Gastrocnemius medialis (tissue), 4 donors: ENCODE measurements at regions of chr15 and their contacts with region 1.

Region 1: DNA sequence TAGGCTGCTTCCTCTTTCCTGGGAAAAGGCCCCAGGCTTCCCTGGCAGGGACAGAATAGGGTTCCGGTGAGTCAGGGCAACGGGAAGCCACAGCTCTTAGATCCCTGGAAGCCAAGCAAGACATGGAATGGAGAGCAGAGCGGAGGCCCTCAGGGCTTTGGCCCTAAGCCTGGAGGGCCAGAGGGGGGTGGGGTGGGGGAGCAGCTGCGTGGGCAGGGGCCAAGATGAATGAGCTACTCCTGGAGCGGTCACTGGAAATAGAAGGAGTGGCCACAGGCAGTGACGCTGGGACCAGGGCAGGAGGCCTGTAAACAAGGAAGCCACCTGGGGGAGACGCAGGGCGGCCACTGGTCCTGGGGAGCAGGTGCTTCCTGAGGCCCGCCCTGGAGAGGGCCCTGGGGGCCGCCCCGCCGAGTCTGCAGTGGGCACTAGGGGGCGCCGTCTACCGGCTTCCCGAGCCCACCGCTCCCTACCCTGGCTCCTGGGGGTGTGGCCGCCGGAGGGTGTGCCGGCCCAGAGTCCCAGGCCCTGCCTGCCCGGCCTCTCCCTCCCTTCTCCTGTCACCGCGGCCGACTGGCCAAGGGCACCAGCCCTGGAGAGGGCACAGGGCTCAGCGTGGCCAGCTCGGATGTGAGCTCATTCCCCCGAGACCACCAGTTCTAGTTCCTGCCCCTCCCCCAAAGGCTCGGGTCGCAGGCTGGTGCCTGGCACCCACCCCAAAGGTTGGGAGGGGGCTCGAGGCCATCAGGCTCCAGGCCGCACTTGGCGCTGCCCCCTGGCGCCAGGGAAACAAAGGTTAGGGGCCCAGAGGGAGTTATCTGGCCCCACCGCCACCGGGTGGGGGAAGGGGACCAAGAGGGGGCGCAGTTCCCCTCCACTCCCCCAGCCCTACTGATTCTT is 12.1 kb downstream of the VPS18 start:
- DNase-seq: peak; percentile 88 to 94
- ATAC-seq: peak; percentile 69 to 77
- H3K4me3 ChIP-seq: peak overlapping the region; percentile 56 to 62 (median 60)
- H3K27ac ChIP-seq: peak overlapping the region; percentile 91 to 94 (median 93)
- H3K4me1 ChIP-seq: peaks cover 34 to 42% of the 10 kb centered on the region in 2 donors
- H3K27me3 ChIP-seq: no peaks in the 10 kb centered on the region
- CTCF ChIP-seq: peak; percentile 91 to 97 (median 94)
- POLR2A ChIP-seq: peak; percentile 54 to 58

Region 2: DNA sequence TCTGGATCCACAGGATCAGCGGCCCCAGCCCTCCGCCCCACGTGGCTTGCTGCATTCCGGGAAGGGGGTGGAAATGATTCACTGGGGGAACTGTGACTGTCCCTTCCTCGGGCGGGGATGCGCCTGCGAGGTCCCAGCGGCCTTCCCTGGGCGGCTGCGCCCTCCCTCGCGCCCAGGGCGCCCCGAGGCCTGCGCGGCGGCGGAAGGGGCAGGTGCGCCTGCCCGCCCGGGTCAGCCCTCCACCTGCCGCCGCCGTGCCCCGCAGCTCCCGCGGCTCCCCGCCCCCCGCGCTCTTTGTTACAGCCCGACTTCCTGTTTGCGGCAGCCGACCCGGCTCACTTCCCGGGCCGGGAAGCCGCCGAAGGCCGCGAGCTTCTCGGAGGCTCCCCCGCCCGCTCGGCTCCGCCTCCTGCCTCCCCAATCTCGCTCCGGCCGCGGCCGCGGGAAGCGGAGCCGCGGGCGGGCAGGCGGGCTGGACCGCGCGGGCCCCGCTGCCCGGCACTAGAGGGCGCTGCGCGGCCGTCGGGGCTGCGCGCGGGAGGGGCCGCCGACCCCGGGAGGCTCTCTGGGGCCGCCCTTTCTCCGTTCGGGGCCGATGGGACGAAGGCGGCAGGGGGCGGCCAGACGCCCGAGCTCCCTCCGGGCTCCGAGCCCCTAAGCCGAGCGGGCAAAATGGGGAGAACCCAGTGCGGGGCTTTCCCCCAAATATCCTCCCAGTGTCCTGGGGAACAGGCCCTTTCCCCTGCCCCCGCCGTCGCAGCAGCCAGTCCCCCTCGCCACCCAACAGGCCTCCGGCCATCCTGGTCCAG is 35.4 kb after region 1 on chr15:
- in situ Hi-C with region 1: no loop called
- intact Hi-C with region 1: loop called (anchors 1 kb)
- DNase-seq: peak; percentile 41 to 56
- ATAC-seq: peak; percentile 62 to 68
- H3K4me3 ChIP-seq: peak overlapping the region; percentile 57 to 81 (median 68)
- H3K27ac ChIP-seq: peak overlapping the region; percentile 76 to 85 (median 82)
- H3K4me1 ChIP-seq: peaks cover 25 to 47% of the 10 kb centered on the region in 2 donors
- H3K27me3 ChIP-seq: peaks cover 0 to 4% (median 0%) of the 10 kb centered on the region in 3 donors
- CTCF ChIP-seq: peak in 4 of 5 experiments; percentile 94 to 97 (median 95)
- POLR2A ChIP-seq: peak; percentile 51 to 53

Region 3: GRCh38 chr15:41001524-41002214 is 95.3 kb after region 1 on chr15:
- in situ Hi-C with region 1: no loop called
- intact Hi-C with region 1: loop called (anchors 5 kb)
- DNase-seq: peak in 1 of 2 donors; percentile 13
- ATAC-seq: peak in 1 of 2 donors; percentile 63
- H3K4me3 ChIP-seq: no peak overlapping the region
- H3K27ac ChIP-seq: peak overlapping the region in 3 of 4 donors; percentile 26 to 53 (median 43)
- H3K4me1 ChIP-seq: peaks cover 21 to 27% of the 10 kb centered on the region in 2 donors
- H3K27me3 ChIP-seq: no peaks in the 10 kb centered on the region
- CTCF ChIP-seq: no peak
- POLR2A ChIP-seq: no peak

Region 4: GRCh38 chr15:41104234-41104633 is 197.9 kb after region 1 on chr15:
- in situ Hi-C with region 1: no loop called
- intact Hi-C with region 1: no loop called
- DNase-seq: no peak
- ATAC-seq: peak in 1 of 2 donors; percentile 26
- H3K4me3 ChIP-seq: no peak overlapping the region
- H3K27ac ChIP-seq: peak overlapping the region in 3 of 4 donors; percentile 1 to 67 (median 29)
- H3K4me1 ChIP-seq: peaks cover 15 to 22% of the 10 kb centered on the region in 2 donors
- H3K27me3 ChIP-seq: no peaks in the 10 kb centered on the region
- CTCF ChIP-seq: no peak
- POLR2A ChIP-seq: no peak

Region 5: DNA sequence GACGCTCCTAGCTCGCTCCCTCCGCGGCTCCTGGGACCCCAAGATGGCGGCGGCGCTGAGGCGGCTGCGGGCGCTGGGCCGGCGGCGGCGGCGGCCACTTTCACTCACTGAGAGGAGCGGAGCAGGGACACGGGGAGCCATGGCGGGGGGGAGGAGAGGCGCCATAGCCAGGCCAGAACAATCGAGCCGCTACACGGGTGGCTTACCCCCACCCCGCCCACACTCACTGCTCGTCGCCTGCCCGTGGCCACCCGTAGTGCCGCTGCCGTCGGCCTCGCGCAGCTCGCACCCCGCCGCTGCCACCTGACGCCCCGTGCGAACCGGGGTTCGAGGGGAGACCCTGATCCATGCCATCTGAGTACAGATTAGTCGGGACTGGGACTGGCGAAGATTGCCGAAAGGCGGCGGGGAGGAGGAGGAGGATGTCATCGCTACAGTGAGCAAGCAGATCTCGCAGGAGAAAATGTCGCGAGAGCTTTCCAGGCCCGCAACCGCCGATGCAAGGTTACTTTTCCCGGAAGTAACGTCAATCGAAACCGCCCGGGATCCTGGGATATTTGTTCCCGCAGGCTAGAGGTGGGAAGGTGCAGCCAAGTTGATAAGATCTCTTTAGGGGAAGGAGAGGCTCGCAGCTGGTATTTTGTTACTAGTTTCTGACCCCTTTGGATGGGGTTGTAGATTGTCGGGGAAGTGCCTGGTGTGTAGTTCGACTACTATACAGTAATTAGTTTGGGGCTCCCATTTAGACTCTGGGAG is 210.0 kb after region 1 on chr15 and contains the start of gene INO80:
- in situ Hi-C with region 1: loop called in 1 of 4 experiments (anchors 10 kb)
- intact Hi-C with region 1: loop called (anchors 1 kb)
- DNase-seq: peak; percentile 98
- ATAC-seq: peak; percentile 93 to 94
- H3K4me3 ChIP-seq: peak within 1 kb of the TSS; percentile 81 to 97 (median 90)
- H3K27ac ChIP-seq: peak within 1 kb of the TSS; percentile 97 to 100 (median 100)
- H3K4me1 ChIP-seq: peaks cover 10 to 24% of the 10 kb centered on the region in 2 donors
- H3K27me3 ChIP-seq: no peaks in the 10 kb centered on the region
- CTCF ChIP-seq: peak in 1 of 5 experiments; percentile 32
- POLR2A ChIP-seq: peak; percentile 74 to 77
- total RNA-seq, gene INO80: 25.5 to 33.0 (median 27.8) TPM

Region 6: GRCh38 chr15:41331833-41332787 is 425.8 kb after region 1 on chr15 and contains the start of gene OIP5:
- in situ Hi-C with region 1: no loop called
- intact Hi-C with region 1: loop called (anchors 2 kb)
- DNase-seq: peak; percentile 99
- ATAC-seq: peak; percentile 97 to 98
- H3K4me3 ChIP-seq: peak within 1 kb of the TSS; percentile 88 to 99 (median 94)
- H3K27ac ChIP-seq: peak within 1 kb of the TSS; percentile 82 to 91 (median 88)
- H3K4me1 ChIP-seq: peaks cover 15 to 18% of the 10 kb centered on the region in 2 donors
- H3K27me3 ChIP-seq: no peaks in the 10 kb centered on the region
- CTCF ChIP-seq: peak; percentile 77 to 87 (median 83)
- POLR2A ChIP-seq: no peak
- total RNA-seq, gene OIP5: 1.9 to 7.8 (median 4.0) TPM